ENCODE measurements at regions of chr22 and their contacts with region 1.

Region 1: DNA sequence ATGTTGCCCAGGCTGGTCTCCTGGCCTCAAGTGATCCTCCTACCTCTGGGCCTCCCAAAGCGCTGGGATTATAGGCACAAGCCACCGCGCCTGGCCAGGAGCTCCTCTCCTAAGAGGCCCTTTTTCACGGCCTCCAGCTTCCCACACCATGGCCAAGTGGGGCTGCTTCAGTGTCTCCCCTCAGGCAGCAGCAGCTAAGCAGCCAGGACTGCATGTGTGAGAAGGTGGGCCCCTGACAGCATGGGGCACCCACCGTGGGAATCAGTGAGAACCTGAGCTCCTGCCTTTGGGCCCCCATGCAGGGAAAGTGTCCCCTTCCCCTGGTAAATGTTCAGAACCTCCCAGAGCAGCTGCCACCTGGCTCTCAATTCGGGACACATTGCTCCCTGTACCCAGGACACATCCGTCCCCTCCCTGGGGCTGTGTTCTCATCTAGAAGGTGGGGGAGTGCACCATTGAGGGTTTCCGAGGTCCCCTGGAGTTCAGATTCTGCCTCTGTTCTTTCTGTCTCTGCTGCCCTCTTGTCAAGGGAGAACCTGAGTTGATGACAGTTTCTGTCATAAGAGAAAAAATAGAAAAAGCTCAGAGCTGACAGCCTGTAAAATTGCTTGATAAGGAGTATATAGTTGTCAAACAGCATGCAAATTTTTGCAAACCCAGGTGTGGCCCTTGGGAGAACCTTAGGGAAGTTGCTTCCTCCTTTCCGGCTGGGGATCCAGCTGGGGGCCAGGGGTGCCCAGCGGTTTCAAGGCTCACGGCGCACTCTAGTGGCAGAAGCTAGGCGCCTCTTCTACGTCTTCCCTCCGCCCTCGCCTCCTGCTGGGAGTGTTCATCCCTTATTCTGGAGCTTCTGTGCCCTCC is 29.7 kb downstream of the FAM83F start:
- DNase-seq: peak; percentile 73
- H3K4me3 Mint-ChIP-seq: no peak overlapping the region
- H3K27ac Mint-ChIP-seq: no peak overlapping the region
- H3K4me1 Mint-ChIP-seq: peaks cover 7% of the 10 kb centered on the region
- H3K27me3 Mint-ChIP-seq: no peaks in the 10 kb centered on the region
- CTCF ChIP-seq: peak; percentile 93

Region 2: GRCh38 chr22:39932918-39933649 is 91.3 kb before region 1 on chr22:
- CTCF ChIA-PET with region 1: interaction called, 8 read pairs
- POLR2A ChIA-PET with region 1: no interaction called
- intact Hi-C with region 1: loop called (anchors 2 kb)
- DNase-seq: peak; percentile 66
- H3K4me3 Mint-ChIP-seq: no peak overlapping the region
- H3K27ac Mint-ChIP-seq: no peak overlapping the region
- H3K4me1 Mint-ChIP-seq: no peaks in the 10 kb centered on the region
- H3K27me3 Mint-ChIP-seq: peaks cover 20% of the 10 kb centered on the region
- CTCF ChIP-seq: peak; percentile 76

Region 3: GRCh38 chr22:39954584-39955055 is 69.8 kb before region 1 on chr22:
- CTCF ChIA-PET with region 1: interaction called, 11 read pairs
- POLR2A ChIA-PET with region 1: no interaction called
- intact Hi-C with region 1: loop called (anchors 2 kb)
- DNase-seq: peak; percentile 15
- H3K4me3 Mint-ChIP-seq: no peak overlapping the region
- H3K27ac Mint-ChIP-seq: no peak overlapping the region
- H3K4me1 Mint-ChIP-seq: peaks cover 4% of the 10 kb centered on the region
- H3K27me3 Mint-ChIP-seq: no peaks in the 10 kb centered on the region
- CTCF ChIP-seq: no peak

Region 4: GRCh38 chr22:40009292-40009769 is 15.1 kb before region 1 on chr22:
- CTCF ChIA-PET with region 1: interaction called, 103 read pairs
- POLR2A ChIA-PET with region 1: interaction called, 9 read pairs
- intact Hi-C with region 1: no loop called
- DNase-seq: no peak
- H3K4me3 Mint-ChIP-seq: peak overlapping the region; percentile 10
- H3K27ac Mint-ChIP-seq: peak overlapping the region; percentile 59
- H3K4me1 Mint-ChIP-seq: peaks cover 35% of the 10 kb centered on the region
- H3K27me3 Mint-ChIP-seq: no peaks in the 10 kb centered on the region
- CTCF ChIP-seq: no peak

Measured in MCF 10A (cell line).